Activated naive CD4-positive, alpha-beta T cell treated with anti-CD3 and anti-CD28 coated beads for 36 hours (primary cell): ENCODE measurements at regions of chr3 and their contacts with region 1.

Region 1: GRCh38 chr3:57770009-57770827 is 14.1 kb downstream of the SLMAP start:
- DNase-seq: no peak
- H3K4me3 Mint-ChIP-seq: no peak overlapping the region
- H3K27ac Mint-ChIP-seq: no peak overlapping the region
- H3K4me1 Mint-ChIP-seq: peaks cover 36% of the 10 kb centered on the region
- H3K27me3 Mint-ChIP-seq: no peaks in the 10 kb centered on the region

Region 2: DNA sequence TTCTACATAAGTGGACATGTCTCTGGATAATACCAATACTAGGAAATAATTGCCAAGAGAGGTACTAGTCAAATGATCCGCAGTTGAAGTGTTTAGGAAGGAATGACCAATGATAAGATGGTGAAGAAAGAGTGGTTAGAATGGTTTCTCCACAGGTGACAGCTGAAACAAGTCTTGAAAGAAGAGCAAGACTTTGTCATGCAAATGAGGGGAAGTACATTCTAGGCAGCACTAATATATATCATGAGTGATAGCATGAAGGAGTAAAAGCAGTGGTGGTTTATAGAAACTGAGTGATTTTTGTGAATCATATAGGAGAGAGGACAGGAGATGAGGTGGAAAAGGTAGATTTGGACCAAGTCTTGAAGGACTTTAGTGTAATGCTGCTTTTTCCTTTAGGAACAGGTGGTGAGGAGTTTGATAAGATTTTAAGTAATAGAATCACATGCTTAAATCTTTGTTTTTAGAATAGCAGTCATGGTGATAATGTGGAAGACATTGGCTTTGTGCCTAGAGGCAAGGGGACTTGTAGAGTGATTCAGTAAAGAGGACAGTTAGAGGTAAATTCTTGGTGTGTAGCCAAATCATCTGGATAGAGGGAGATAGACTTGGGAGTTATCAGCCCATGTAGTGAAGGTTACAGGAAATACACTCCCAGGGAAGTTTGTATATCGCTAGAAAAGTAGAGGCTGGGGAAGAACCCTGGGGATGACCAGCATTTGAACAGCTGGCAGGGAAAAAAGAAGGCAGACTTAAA is 17.8 kb after region 1 on chr3:
- CTCF ChIA-PET with region 1: interaction called, 4 read pairs
- intact Hi-C with region 1: loop called (anchors 2 kb)
- DNase-seq: no peak
- H3K4me3 Mint-ChIP-seq: no peak overlapping the region
- H3K27ac Mint-ChIP-seq: no peak overlapping the region
- H3K4me1 Mint-ChIP-seq: peaks cover 31% of the 10 kb centered on the region
- H3K27me3 Mint-ChIP-seq: no peaks in the 10 kb centered on the region

Region 3: GRCh38 chr3:57910988-57911387 is 140.8 kb after region 1 on chr3:
- CTCF ChIA-PET with region 1: no interaction called
- intact Hi-C with region 1: no loop called
- DNase-seq: peak; percentile 27
- H3K4me3 Mint-ChIP-seq: no peak overlapping the region
- H3K27ac Mint-ChIP-seq: no peak overlapping the region
- H3K4me1 Mint-ChIP-seq: no peaks in the 10 kb centered on the region
- H3K27me3 Mint-ChIP-seq: no peaks in the 10 kb centered on the region